WTC11 (cell line): ENCODE measurements at regions of chr19 and their contacts with region 1.

Region 1: GRCh38 chr19:17282488-17283255 is 971 bp downstream of the ANKLE1 start:
- DNase-seq: peak; percentile 92
- ATAC-seq: peak; percentile 91
- H3K4me3 Mint-ChIP-seq: peak overlapping the region; percentile 70
- H3K27ac Mint-ChIP-seq: no peak overlapping the region
- H3K4me1 Mint-ChIP-seq: peaks cover 3% of the 10 kb centered on the region; the same call in 1 of the 2 replicates
- H3K27me3 Mint-ChIP-seq: peaks cover 6% of the 10 kb centered on the region
- CTCF ChIP-seq: peak; percentile 93

Region 2: DNA sequence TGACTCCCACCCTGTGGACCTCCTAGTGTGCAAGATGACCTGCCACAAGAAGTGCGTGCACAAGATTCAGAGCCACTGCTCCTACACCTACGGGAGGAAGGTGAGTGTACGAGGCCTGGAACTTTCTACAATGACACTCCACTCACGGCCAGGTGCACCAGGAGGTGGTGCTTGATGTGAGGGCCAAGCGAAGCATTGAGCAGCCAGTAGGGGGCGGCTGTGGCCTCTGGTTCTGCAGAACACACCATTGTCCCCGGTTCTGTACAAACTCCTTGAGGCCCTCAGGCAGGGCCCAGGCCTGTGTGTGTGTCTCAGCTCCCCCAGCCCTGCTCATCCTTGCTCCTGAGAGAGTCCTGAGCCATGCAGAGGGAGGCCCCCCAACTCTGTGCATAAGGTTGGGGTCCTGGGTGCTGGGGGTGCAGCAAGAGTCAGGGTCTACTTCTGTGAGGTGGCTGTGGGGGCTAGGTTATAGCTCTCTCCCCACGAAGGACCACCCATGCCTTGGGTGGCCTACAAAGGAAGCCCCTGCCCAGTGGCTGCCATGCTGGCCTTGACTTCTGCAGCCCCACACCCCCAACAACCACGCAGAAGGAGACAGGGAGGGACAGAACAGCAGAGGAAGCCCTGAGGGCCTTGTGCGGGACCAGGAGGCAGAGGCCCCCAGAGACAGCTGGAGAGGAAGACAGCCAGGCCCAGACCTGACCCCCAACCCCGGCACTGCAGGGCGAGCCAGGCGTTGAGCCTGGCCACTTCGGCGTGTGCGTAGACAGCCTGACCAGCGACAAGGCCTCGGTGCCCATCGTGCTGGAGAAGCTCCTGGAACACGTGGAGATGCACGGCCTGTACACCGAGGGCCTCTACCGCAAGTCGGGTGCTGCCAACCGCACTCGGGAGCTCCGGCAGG is 77.2 kb before region 1 on chr19:
- CTCF ChIA-PET with region 1: interaction called, 16 read pairs
- POLR2A ChIA-PET with region 1: no interaction called
- DNase-seq: peak; percentile 84
- ATAC-seq: peak; percentile 21
- H3K4me3 Mint-ChIP-seq: no peak overlapping the region
- H3K27ac Mint-ChIP-seq: no peak overlapping the region
- H3K4me1 Mint-ChIP-seq: peaks cover 12% of the 10 kb centered on the region
- H3K27me3 Mint-ChIP-seq: no peaks in the 10 kb centered on the region
- CTCF ChIP-seq: peak; percentile 74

Region 3: DNA sequence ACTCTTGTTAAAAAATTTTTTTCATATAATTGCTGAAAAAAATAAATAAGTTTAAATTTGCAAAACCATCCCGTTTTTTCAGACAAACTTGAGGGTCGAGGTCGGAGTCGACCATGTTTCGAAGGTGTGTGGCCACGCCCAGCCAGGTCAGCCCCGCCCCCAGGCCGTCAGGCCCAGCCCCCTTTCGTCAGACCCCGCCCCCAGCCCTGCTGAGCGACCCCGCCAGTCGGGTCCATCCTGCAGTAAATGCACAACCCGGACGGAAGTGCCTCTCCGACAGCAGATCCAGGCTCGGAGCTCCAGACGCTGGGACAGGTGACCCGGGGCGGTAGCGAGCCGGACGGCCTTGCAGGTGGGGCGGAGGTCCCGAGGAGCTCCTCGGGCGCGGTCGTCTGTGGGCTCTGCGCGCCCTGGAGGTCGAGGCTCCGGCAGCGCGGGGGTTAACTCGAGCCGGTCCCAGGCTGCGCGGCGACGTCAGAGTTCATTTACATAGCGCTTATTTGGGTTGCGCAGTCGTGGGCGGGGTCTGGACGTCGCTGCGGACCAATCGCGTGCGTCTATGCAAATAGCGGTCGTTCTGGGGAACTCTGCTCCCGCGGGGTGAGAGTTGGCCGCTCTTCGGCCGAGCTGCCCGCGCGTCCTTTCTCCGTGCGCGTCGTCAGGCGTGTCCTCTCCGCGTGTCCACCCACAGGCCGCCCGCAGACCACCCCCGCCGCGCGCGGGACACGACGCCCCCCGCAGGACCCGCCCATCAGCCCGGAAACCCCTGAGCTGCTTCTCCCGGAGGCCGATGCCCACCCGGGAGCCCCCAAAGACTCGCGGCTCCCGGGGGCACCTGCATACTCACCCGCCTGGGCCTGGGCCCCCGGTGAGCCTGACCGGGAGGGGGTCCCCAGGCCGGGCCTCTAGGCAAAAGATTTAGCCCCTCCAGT is 56.4 kb before region 1 on chr19 and contains the start of gene OCEL1:
- CTCF ChIA-PET with region 1: interaction called, 12 read pairs
- POLR2A ChIA-PET with region 1: interaction called, 4 read pairs
- DNase-seq: peak; percentile 98
- ATAC-seq: peak; percentile 92
- H3K4me3 Mint-ChIP-seq: peak within 1 kb of the TSS; percentile 89
- H3K27ac Mint-ChIP-seq: peak within 1 kb of the TSS; percentile 100
- H3K4me1 Mint-ChIP-seq: peaks cover 15% of the 10 kb centered on the region
- H3K27me3 Mint-ChIP-seq: peaks cover 2% of the 10 kb centered on the region; the same call in 1 of the 2 replicates
- CTCF ChIP-seq: no peak
- total RNA-seq, gene OCEL1: 34.0 to 51.6 TPM (median 40.9 TPM) in 3 replicates

Region 4: GRCh38 chr19:17260842-17261325 is 21.8 kb before region 1 on chr19:
- CTCF ChIA-PET with region 1: interaction called, 29 read pairs
- POLR2A ChIA-PET with region 1: no interaction called
- DNase-seq: peak; percentile 94
- ATAC-seq: peak; percentile 94
- H3K4me3 Mint-ChIP-seq: no peak overlapping the region
- H3K27ac Mint-ChIP-seq: peak overlapping the region; percentile 33
- H3K4me1 Mint-ChIP-seq: peaks cover 19% of the 10 kb centered on the region
- H3K27me3 Mint-ChIP-seq: peaks cover 7% of the 10 kb centered on the region
- CTCF ChIP-seq: peak; percentile 96

Region 5: GRCh38 chr19:17266975-17267788 is 15.5 kb before region 1 on chr19 and contains the start of gene BABAM1:
- CTCF ChIA-PET with region 1: interaction called, 29 read pairs
- POLR2A ChIA-PET with region 1: interaction called, 13 read pairs
- DNase-seq: peak; percentile 96
- ATAC-seq: peak; percentile 95
- H3K4me3 Mint-ChIP-seq: peak within 1 kb of the TSS; percentile 96
- H3K27ac Mint-ChIP-seq: peak within 1 kb of the TSS; percentile 92
- H3K4me1 Mint-ChIP-seq: peaks cover 20% of the 10 kb centered on the region
- H3K27me3 Mint-ChIP-seq: no peaks in the 10 kb centered on the region
- CTCF ChIP-seq: no peak
- total RNA-seq, gene BABAM1: 139 to 147 TPM (median 146 TPM) in 3 replicates

Region 6: GRCh38 chr19:17305517-17306284 is 23.0 kb after region 1 on chr19 and contains the start of gene MRPL34:
- CTCF ChIA-PET with region 1: interaction called, 10 read pairs
- POLR2A ChIA-PET with region 1: no interaction called
- DNase-seq: peak; percentile 99
- ATAC-seq: peak; percentile 51
- H3K4me3 Mint-ChIP-seq: peak within 1 kb of the TSS; percentile 89
- H3K27ac Mint-ChIP-seq: peak within 1 kb of the TSS; percentile 91
- H3K4me1 Mint-ChIP-seq: peaks cover 45% of the 10 kb centered on the region
- H3K27me3 Mint-ChIP-seq: no peaks in the 10 kb centered on the region
- CTCF ChIP-seq: no peak; the same call in 1 of the 2 replicates
- total RNA-seq, gene MRPL34: 117 to 130 TPM (median 122 TPM) in 3 replicates

Region 7: DNA sequence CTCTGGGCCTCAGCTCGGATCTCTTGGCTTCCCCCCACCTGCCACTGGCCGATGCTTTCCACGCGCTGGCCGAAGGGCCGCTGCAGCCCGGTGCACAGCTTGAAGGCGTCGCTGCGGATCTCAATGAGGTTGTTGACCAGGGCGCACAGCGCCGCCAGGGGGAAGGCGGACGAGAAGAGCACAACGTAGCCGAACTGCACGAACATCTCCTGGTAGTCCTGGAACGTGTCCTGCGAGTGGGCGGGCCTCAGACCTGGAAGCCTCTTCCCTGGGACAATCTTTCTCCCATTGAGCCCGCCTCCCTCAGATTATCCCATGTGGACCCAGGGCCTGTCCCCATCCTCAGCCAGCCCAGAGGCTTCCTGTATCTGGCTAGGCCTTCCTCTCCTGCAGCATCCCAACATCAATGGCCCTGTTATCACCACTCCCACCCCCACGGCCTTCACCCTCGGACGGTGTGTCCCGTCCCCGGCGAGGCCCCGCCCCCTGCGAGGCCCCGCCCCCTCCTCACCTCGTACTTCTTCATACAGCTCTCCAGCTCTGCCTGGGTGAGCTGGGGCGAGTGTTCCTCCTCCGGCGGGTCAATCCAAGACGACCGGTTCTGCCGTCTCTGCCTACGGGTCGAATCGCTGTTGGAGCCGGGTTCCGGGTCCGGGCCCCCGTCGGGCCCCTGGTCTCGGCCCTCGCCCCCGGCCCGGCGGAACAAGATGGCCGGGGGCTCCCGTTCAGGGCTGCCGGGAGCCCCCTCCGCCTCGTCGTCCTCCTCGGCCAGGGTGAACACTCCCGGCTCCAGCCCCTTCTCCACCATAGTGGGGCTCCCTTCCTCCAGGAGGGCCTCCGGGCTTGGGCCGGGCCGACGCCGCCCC is 45.2 kb after region 1 on chr19:
- CTCF ChIA-PET with region 1: interaction called, 18 read pairs
- POLR2A ChIA-PET with region 1: no interaction called
- DNase-seq: peak; percentile 93
- ATAC-seq: peak; percentile 72
- H3K4me3 Mint-ChIP-seq: peak overlapping the region; percentile 84
- H3K27ac Mint-ChIP-seq: peak overlapping the region; percentile 98
- H3K4me1 Mint-ChIP-seq: peaks cover 16% of the 10 kb centered on the region
- H3K27me3 Mint-ChIP-seq: peaks cover 5% of the 10 kb centered on the region
- CTCF ChIP-seq: 0 out of 2 replicates have a peak, but pooled peaks have one; percentile 17